ENCODE measurements at regions of chr1 and their contacts with region 1.

Region 1: GRCh38 chr1:116570358-116571200 is at the start of gene CD58:
- DNase-seq: peak; percentile 92 to 93
- ATAC-seq: peak; percentile 92 to 96 (median 92)
- H3K4me3 ChIP-seq: peak within 1 kb of the TSS; percentile 67 to 97 (median 88)
- H3K27ac ChIP-seq: peak within 1 kb of the TSS; percentile 91 to 100 (median 98)
- H3K4me1 ChIP-seq: peaks cover 15 to 81% (median 61%) of the 10 kb centered on the region in 9 donors
- H3K27me3 ChIP-seq: no peaks in the 10 kb centered on the region
- CTCF ChIP-seq: peak; percentile 57 to 85 (median 70)
- total RNA-seq, gene CD58: 17.2 to 41.1 (median 26.5) TPM

Region 2: DNA sequence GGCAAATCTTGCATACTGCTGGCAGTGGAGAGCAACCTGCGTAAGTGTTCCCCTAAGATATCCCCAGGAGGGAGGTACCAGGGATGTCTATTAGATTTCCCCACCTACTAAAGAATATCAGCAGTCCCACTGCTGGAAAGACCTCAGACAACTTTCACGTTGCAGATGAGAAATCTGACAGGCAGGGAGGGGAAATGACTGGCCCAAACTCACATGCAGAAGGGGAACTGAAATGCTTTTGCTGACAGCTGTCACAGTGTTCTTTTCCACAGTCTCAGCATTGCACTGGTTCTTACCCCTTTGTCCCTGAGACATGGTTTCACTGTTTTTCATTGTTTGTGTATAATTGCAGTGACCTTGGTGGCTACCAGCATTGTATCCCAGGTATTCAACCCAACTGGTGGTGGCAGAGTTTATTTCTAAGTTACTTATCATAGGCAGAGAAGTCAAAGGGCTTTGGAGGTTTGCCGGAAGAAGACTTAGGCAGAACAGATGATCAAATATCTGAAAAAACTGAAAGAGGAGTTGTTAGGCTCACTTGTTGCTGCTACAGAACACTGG is 282.3 kb before region 1 on chr1:
- intact Hi-C with region 1: no loop called
- DNase-seq: no peak
- ATAC-seq: no peak
- H3K4me3 ChIP-seq: no peak overlapping the region
- H3K27ac ChIP-seq: no peak overlapping the region
- H3K4me1 ChIP-seq: no peaks in the 10 kb centered on the region
- H3K27me3 ChIP-seq: peaks cover 0 to 4% (median 0%) of the 10 kb centered on the region in 7 donors
- CTCF ChIP-seq: no peak

Region 3: DNA sequence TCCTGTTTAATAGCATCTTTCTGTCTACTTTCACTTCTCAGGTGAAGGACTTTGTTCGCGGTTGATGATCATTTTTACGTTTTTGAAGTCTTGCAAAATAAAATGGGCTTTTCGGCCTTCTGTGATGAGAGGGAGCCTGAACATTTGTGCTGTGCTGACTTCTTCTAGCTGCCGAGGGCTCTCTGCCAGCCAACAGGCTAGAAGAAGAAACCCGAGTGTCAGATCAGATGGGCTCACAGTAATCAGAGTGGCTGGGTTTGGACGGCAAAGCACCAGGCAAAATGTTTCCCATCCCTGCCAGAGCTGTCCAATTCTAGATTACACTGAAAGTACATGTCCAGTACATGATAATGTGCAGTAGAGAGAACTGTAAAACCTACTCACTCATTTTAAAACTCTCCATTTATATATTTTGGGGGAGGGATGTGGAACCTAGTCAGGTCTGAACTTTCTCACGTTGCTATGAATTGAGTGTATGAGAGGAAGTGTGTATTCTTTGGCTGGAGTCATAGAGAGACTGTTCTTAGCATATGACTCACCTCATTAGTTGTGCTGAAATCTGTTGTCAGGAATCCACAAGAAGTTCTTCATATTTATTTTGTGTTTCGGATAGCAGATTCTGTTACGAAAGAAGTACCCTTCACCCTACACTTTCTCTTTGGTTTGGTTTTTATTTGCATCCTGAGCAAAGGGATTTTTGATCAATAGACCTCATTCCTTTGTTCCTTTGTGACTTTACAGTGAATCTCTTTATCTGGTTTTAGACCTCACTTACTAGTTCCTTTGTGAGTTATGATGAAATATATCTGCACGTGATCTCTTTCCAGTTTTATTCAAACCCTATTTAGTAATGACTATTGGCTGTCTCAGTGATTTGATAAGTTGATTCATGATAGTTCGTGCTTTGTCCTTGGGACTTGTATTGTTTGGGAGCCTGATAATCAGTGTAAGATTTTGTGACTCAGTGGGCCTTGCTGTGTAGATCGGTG is 192.7 kb before region 1 on chr1:
- intact Hi-C with region 1: loop called in 2 of 10 experiments (anchors 5 kb)
- DNase-seq: peak; percentile 57 to 62
- ATAC-seq: peak in 7 of 8 donors; percentile 18 to 51 (median 47)
- H3K4me3 ChIP-seq: peak overlapping the region in 7 of 10 donors; percentile 3 to 88 (median 29)
- H3K27ac ChIP-seq: peak overlapping the region; percentile 91 to 98 (median 97)
- H3K4me1 ChIP-seq: peaks cover 28 to 92% (median 86%) of the 10 kb centered on the region in 9 donors
- H3K27me3 ChIP-seq: no peaks in the 10 kb centered on the region
- CTCF ChIP-seq: no peak

Region 4: DNA sequence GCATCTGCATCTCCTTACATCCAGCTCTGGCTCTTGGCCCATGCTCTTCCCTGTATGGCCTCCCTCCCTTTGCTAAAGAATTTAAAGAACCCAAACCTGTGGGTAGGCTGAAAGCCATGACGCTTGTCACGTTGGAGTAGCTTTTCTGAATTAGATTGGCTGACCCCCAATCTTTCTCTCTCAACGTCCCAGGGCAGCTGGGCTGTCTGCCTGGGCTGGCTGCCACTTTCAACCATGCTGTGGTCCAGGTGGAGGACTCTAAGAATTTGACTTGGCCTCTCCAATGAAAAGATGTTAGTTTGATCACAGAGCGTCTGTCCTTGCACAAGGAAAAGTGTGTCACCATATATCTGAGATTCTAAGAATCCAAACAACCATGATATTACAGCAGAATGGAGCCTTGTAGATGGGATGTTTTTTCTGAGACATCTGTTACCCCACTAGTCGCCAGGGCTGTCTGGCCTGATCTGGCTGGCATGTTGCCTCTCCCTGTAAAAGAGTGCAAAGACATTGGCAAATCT is 103.5 kb after region 1 on chr1:
- intact Hi-C with region 1: loop called in 9 of 10 experiments (anchors 2 to 10 kb)
- DNase-seq: no peak
- ATAC-seq: no peak
- H3K4me3 ChIP-seq: no peak overlapping the region
- H3K27ac ChIP-seq: no peak overlapping the region
- H3K4me1 ChIP-seq: peaks cover 0 to 4% (median 0%) of the 10 kb centered on the region in 9 donors
- H3K27me3 ChIP-seq: peaks cover 0 to 14% (median 4%) of the 10 kb centered on the region in 7 donors
- CTCF ChIP-seq: no peak

Region 5: DNA sequence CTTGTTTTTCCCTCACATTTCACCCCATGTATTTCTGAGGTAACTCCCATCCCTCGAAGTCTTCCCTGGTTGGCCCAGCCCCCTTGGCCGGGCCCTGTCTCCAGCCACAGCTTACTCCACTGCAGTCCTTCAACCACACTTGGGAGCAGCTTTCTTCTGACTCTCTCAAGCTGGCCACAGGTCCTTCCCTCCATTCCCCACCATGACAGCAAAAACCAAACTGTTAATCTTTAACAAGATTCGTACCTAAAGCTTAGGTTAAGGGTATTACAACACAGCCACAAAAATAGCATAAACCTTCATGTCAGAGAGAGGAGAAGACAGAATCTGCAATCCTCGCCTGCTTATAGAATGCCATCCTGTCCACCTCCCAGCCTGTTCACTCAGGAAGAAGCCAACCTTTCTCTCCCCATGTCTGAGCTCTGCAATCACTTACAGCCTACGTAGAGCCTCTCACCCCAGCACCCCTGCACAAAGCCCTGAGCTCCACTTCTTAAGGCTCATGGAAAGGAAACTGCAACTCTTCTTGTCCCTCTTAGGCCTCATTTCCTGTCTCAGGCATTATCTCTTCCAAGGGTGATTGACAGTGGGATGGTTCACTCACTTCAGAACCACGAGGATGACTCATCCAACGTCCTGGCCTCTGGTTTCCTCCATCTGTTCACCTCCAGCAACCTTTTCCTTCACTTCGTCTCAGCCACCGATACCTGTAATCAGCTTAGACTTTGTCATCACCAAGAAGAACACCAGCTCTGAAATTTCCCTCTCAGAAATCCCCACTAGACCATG is 256.4 kb after region 1 on chr1:
- intact Hi-C with region 1: loop called in 1 of 10 experiments (anchors 10 kb)
- DNase-seq: no peak
- ATAC-seq: no peak
- H3K4me3 ChIP-seq: no peak overlapping the region
- H3K27ac ChIP-seq: no peak overlapping the region
- H3K4me1 ChIP-seq: peaks cover 7 to 24% (median 14%) of the 10 kb centered on the region in 9 donors
- H3K27me3 ChIP-seq: no peaks in the 10 kb centered on the region
- CTCF ChIP-seq: no peak

Region 6: GRCh38 chr1:117059678-117060440 is 489.3 kb after region 1 on chr1 and contains the start of gene TTF2:
- intact Hi-C with region 1: loop called in 8 of 10 experiments (anchors 1 to 10 kb)
- DNase-seq: peak; percentile 82 to 97
- ATAC-seq: peak; percentile 99 to 100 (median 99)
- H3K4me3 ChIP-seq: peak within 1 kb of the TSS; percentile 57 to 88 (median 78)
- H3K27ac ChIP-seq: peak within 1 kb of the TSS in 8 of 10 donors; percentile 7 to 82 (median 64)
- H3K4me1 ChIP-seq: peaks cover 0 to 25% (median 9%) of the 10 kb centered on the region in 9 donors
- H3K27me3 ChIP-seq: no peaks in the 10 kb centered on the region
- CTCF ChIP-seq: peak in 7 of 9 donors; percentile 15 to 57 (median 30)
- total RNA-seq, gene TTF2: 5.0 to 19.0 (median 10.4) TPM

Measured in heart right ventricle (tissue), 16 donors.